Lower leg skin (tissue), 4 donors: ENCODE measurements at regions of chr14 and their contacts with region 1.

Region 1: GRCh38 chr14:37253905-37254304 is 56.2 kb downstream of the MIPOL1 start:
- DNase-seq: no peak
- H3K4me3 ChIP-seq: no peak overlapping the region
- CTCF ChIP-seq: no peak
- POLR2A ChIP-seq: no peak

Region 2: GRCh38 chr14:37874429-37875191 is 620.7 kb after region 1 on chr14:
- intact Hi-C with region 1: loop called (anchors 10 kb)
- DNase-seq: peak; percentile 73 to 95
- H3K4me3 ChIP-seq: no peak overlapping the region
- CTCF ChIP-seq: peak in 1 of 3 donors; percentile 71
- POLR2A ChIP-seq: no peak